ENCODE measurements at regions of chr17 and their contacts with region 1.

Region 1: DNA sequence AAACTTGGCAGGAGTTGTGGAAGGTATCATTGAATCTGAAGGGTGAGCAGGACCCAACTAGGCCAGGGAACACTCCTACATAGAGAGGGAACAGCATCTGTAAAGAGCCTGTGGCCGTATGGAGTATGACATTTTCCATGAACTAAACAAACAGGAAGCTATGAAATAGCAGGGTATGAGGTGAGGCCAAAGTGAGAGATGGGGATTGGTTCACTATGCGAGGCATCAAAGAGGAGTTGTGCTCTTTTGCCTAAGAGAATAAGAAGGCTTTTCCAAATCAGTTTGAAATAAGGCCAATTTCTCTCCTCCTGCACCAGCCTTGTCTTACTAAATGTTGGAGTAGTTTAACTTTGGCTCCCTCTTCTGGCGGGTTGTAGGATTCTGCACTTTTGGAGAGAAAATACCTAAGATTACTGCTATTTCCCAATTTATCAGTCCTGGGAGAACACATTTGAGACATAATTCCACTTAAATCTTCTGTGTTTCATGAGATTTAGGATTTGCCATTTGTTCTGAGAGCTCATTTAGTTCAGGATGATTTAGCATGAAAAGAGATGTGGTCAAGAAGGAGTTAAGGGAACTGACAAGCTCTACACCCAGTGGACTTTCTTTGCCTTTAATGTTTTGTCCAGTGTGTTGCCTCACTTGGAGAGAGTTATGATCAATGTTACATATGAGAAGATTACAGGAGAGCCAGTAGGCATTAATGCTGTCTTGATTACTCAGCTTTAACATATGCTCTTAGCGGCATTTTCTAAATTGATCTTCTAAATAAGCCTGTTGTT is 55.4 kb downstream of the TNRC6C start:
- DNase-seq: peak; percentile 81
- H3K4me3 Mint-ChIP-seq: no peak overlapping the region
- H3K27ac Mint-ChIP-seq: no peak overlapping the region
- H3K4me1 Mint-ChIP-seq: peaks cover 6% of the 10 kb centered on the region
- H3K27me3 Mint-ChIP-seq: no peaks in the 10 kb centered on the region
- CTCF ChIP-seq: peak; percentile 86

Region 2: DNA sequence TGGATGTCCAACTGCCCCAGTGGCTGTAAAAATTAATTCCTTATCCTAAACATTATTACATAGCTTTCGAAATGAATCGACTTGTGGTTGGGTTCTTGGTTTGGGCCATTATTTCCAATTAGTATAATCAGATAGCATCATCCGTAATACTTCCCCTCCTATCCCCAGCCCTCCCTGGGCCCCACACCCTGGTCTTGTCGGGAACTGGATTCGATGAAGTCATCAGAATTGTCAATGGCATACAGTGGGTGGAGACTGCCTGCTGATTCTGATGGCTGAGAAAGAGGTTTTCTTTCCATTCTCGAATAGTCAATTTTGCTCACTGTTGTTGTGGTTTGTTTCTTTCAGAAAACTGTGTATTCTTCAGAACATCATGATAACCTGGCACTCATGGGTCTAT is 478.0 kb before region 1 on chr17:
- CTCF ChIA-PET with region 1: interaction called, 123 read pairs
- POLR2A ChIA-PET with region 1: interaction called, 3 read pairs
- intact Hi-C with region 1: no loop called
- DNase-seq: no peak
- H3K4me3 Mint-ChIP-seq: no peak overlapping the region
- H3K27ac Mint-ChIP-seq: no peak overlapping the region
- H3K4me1 Mint-ChIP-seq: no peaks in the 10 kb centered on the region
- H3K27me3 Mint-ChIP-seq: peaks cover 36% of the 10 kb centered on the region
- CTCF ChIP-seq: no peak

Region 3: DNA sequence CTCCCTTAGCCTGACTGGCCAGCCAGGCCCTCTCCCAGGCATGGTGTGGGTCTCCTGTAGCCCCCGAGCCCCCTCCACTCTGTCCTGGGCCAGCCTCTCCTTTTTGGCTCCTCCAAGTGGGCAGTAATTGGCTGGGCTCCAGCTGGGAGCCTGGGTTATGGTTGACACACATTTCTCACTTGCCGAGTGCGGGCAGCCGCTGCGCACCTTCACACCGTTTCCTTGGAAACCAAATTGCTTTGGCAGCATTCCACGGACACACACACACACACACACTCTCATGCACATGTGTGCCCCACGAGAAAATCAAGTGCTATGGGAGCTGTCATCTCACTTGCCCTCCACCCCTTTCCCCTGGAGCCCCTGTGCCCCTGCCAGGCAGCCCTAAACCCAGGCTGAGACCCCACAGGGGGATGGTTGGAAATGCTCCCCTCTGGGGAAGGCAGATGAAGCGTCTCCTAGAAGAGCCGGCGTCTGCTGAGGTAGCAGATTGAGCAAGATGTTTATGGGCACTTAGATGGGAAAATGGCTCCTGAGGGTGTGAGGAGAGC is 458.1 kb before region 1 on chr17:
- CTCF ChIA-PET with region 1: interaction called, 5 read pairs
- POLR2A ChIA-PET with region 1: no interaction called
- intact Hi-C with region 1: loop called (anchors 5 kb)
- DNase-seq: peak; percentile 55
- H3K4me3 Mint-ChIP-seq: no peak overlapping the region
- H3K27ac Mint-ChIP-seq: no peak overlapping the region
- H3K4me1 Mint-ChIP-seq: no peaks in the 10 kb centered on the region
- H3K27me3 Mint-ChIP-seq: peaks cover 56% of the 10 kb centered on the region
- CTCF ChIP-seq: no peak

Region 4: DNA sequence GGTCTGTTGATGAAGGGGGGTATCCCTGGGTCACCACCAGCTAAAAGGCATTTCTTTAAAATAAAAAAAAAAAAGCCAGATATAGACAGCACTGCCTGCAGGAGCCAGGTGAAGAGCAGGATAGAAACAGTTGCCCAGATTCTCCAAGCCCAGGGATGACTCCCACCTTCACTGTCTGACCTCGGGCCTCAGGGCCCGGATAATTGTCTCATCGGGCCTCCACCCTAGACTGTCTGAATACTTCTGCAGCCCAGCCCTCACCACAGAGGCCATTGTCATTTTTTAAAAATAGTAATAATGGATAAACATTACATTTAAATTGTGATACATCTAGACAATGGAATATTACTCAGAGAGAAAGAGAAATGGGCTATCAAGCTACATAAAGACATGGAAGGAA is 148.2 kb before region 1 on chr17:
- CTCF ChIA-PET with region 1: no interaction called
- POLR2A ChIA-PET with region 1: no interaction called
- intact Hi-C with region 1: no loop called
- DNase-seq: no peak
- H3K4me3 Mint-ChIP-seq: no peak overlapping the region
- H3K27ac Mint-ChIP-seq: no peak overlapping the region
- H3K4me1 Mint-ChIP-seq: no peaks in the 10 kb centered on the region
- H3K27me3 Mint-ChIP-seq: peaks cover 38% of the 10 kb centered on the region
- CTCF ChIP-seq: no peak

Region 5: DNA sequence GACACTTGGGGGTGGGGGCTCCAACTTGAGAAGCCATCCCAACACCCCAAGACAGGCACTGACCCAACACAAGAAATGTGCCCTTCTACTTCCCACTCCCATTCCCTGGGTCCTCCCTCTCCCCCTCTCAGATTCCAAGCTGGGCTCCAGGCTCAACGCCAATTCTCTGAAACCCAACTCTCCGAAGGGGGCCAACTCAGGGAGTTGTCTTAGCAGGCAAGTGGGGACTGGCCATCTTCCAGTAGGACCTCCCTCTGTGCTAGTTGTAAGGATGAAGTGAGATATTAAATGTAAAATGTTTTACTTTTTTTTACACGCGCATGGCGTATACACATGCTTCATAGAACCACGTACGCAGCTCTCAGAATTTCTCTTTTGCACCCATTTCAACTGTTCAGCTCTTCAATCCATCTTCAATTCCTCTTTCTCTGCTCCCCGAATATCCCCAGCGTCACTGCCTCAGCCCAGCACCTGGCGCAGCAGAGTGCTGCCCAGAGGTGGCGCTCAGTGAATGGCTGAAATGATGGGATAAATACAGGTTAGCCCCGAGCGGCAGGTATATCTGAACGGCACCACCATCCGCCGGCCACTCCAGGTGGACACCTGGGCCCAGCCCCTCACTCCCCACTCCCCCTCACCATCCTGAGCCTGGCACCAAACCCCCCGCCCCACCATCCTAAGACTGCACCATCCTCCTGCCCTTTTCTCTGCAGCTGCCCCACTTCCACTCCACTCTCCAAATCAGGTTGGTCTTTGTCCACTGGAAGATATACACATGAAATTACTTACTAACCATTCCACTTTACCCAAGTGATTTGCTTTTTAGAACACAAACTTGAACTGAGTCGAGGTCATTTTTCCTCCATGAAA is 99.3 kb before region 1 on chr17:
- CTCF ChIA-PET with region 1: interaction called, 3 read pairs
- POLR2A ChIA-PET with region 1: no interaction called
- intact Hi-C with region 1: loop called (anchors 1 kb)
- DNase-seq: peak; percentile 14
- H3K4me3 Mint-ChIP-seq: no peak overlapping the region
- H3K27ac Mint-ChIP-seq: no peak overlapping the region
- H3K4me1 Mint-ChIP-seq: no peaks in the 10 kb centered on the region
- H3K27me3 Mint-ChIP-seq: peaks cover 89% of the 10 kb centered on the region
- CTCF ChIP-seq: no peak

Region 6: GRCh38 chr17:77968788-77969187 is 45.1 kb before region 1 on chr17:
- CTCF ChIA-PET with region 1: interaction called, 14 read pairs
- POLR2A ChIA-PET with region 1: interaction called, 3 read pairs
- intact Hi-C with region 1: no loop called
- DNase-seq: no peak
- H3K4me3 Mint-ChIP-seq: no peak overlapping the region
- H3K27ac Mint-ChIP-seq: no peak overlapping the region
- H3K4me1 Mint-ChIP-seq: no peaks in the 10 kb centered on the region
- H3K27me3 Mint-ChIP-seq: no peaks in the 10 kb centered on the region
- CTCF ChIP-seq: no peak

Region 7: DNA sequence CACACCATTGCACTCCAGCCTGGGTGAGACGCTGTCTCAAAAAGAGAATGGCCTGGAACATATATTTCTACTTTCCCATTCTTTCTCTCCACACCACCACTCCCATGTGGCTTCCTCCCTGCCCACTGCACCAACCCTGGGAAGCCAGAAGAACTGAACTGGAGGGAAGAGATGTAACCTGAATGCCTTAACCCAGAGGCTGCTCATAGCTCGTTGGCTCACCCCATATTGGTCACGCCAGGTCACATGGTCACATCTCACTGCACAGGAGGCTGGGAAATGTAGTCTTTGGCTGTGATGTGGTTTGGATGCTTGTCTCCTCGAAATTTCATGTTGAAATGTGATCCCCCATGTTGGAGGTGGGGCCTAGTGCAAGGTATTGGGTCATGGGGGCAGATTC is 569.2 kb after region 1 on chr17:
- CTCF ChIA-PET with region 1: no interaction called
- POLR2A ChIA-PET with region 1: no interaction called
- intact Hi-C with region 1: no loop called
- DNase-seq: peak; percentile 18
- H3K4me3 Mint-ChIP-seq: no peak overlapping the region
- H3K27ac Mint-ChIP-seq: no peak overlapping the region
- H3K4me1 Mint-ChIP-seq: peaks cover 7% of the 10 kb centered on the region
- H3K27me3 Mint-ChIP-seq: no peaks in the 10 kb centered on the region
- CTCF ChIP-seq: no peak